Endothelial cell of umbilical vein (primary cell): ENCODE measurements at regions of chr10 and their contacts with region 1.

Region 1: GRCh38 chr10:36489611-36490228 is 635.7 kb upstream of the ANKRD30A start:
- DNase-seq: peak; percentile 93
- H3K4me3 ChIP-seq: no peak overlapping the region
- H3K27ac ChIP-seq: peak overlapping the region; percentile 91
- H3K4me1 ChIP-seq: peaks cover 53% of the 10 kb centered on the region
- H3K27me3 ChIP-seq: no peaks in the 10 kb centered on the region
- CTCF ChIP-seq: no peak
- POLR2A ChIP-seq: no peak

Region 2: GRCh38 chr10:35889971-35890677 is 599.6 kb before region 1 on chr10:
- CTCF ChIA-PET with region 1: no interaction called
- POLR2A ChIA-PET with region 1: no interaction called
- dilution Hi-C with region 1: no loop called
- intact Hi-C with region 1: loop called (anchors 5 kb)
- DNase-seq: peak; percentile 85
- H3K4me3 ChIP-seq: no peak overlapping the region
- H3K27ac ChIP-seq: peak overlapping the region; percentile 58
- H3K4me1 ChIP-seq: peaks cover 19% of the 10 kb centered on the region
- H3K27me3 ChIP-seq: peaks cover 0 to 2% of the 10 kb centered on the region in 2 experiments
- CTCF ChIP-seq: no peak
- POLR2A ChIP-seq: no peak

Region 3: DNA sequence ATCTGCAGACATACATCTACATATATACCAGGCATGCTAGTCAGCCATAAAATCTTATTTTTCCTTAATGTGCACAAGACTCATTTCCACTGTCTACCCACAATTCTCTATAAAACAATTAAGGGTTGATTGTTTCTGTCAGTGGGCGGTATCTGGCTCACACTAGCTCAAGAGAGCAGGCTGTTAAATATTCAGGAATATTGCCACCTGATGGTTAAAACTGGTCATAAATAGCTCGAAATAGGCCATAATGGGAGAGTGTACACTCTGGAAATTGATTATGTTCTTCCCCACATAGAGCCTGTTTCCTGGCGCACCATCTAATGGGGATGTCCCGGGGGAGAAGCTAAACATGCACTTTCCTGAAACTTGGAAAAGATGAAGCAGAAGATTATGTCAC is 15.0 kb after region 1 on chr10:
- CTCF ChIA-PET with region 1: interaction called, 13 read pairs
- POLR2A ChIA-PET with region 1: no interaction called
- dilution Hi-C with region 1: no loop called
- intact Hi-C with region 1: no loop called
- DNase-seq: peak; percentile 46
- H3K4me3 ChIP-seq: no peak overlapping the region
- H3K27ac ChIP-seq: no peak overlapping the region
- H3K4me1 ChIP-seq: peaks cover 2% of the 10 kb centered on the region
- H3K27me3 ChIP-seq: peaks cover 2 to 9% of the 10 kb centered on the region in 2 experiments
- CTCF ChIP-seq: no peak
- POLR2A ChIP-seq: no peak

Region 4: DNA sequence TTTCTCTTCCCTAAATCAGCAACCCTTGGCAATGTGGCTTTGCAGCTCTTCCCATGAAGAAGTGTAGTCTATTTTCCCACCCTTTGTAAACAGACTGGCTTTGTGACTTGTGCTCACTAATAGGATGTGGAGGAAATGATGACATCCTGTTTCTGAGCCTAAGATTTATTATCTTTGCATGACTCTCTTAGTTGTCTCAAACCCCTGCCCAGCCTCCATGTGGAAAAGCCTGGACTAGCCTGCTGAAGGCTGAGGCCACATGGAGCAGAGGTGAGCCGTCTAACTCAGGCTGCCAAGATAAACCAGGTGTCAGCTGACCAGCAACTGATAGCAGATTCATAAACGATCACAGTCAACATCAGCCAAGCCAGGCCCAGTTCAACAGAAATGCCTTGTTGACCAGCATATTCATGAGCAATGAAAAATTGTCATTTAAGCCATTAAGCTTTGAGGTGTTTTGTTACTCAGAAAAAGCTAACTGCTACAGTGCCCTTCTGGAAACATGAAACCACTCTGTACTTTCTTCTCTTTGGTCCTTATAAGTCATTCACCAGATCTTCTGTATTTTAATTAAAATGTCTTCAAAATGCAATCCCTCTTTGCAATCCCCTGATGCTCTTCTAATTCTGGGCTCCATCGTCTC is 49.3 kb after region 1 on chr10:
- CTCF ChIA-PET with region 1: interaction called, 5 read pairs
- POLR2A ChIA-PET with region 1: no interaction called
- dilution Hi-C with region 1: no loop called
- intact Hi-C with region 1: loop called (anchors 1 kb)
- DNase-seq: peak; percentile 100
- H3K4me3 ChIP-seq: no peak overlapping the region
- H3K27ac ChIP-seq: peak overlapping the region; percentile 63
- H3K4me1 ChIP-seq: peaks cover 30% of the 10 kb centered on the region
- H3K27me3 ChIP-seq: no peaks in the 10 kb centered on the region
- CTCF ChIP-seq: peak; percentile 14 to 16
- POLR2A ChIP-seq: peak; percentile 57

Region 5: DNA sequence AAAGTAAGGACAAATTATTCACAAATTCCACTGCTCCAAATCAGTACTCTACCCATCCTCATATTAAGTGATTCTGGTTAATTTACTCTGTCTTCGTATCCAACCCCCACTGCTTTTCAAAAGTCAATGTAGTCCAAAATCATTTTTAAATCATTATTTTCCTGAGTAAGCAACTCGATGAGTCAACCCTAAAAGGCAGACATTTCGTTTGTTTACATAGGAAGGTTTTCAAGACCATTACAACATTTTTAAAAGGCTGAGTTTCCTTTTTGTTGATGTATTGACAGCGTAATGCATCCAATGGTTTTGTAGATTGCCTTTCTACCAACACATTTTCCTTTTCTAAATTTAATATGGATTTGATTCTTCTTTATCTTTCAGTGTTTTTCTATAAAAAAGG is 112.7 kb after region 1 on chr10:
- CTCF ChIA-PET with region 1: no interaction called
- POLR2A ChIA-PET with region 1: no interaction called
- dilution Hi-C with region 1: no loop called
- intact Hi-C with region 1: loop called (anchors 1 kb)
- DNase-seq: peak; percentile 77
- H3K4me3 ChIP-seq: no peak overlapping the region
- H3K27ac ChIP-seq: no peak overlapping the region
- H3K4me1 ChIP-seq: peaks cover 32% of the 10 kb centered on the region
- H3K27me3 ChIP-seq: no peaks in the 10 kb centered on the region
- CTCF ChIP-seq: no peak
- POLR2A ChIP-seq: no peak

Region 6: DNA sequence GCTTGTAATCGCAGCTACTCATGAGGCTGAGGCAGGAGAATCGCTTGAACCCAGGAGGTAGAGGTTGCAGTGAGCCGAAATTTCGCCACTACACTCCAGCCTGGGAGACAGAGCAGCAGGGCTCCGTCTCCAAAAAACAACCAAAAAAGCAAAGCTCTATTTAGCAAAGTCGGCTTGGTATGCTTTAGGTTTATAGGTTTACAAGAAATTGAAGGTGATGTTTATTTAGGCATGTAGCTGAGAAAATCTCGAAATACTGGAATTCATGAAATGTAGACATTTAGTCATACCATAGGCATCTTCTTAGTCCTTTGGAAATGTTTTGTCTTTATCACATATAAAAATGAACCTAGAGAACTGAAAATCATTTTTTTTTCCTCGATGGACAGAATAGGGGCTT is 181.9 kb after region 1 on chr10:
- CTCF ChIA-PET with region 1: no interaction called
- POLR2A ChIA-PET with region 1: no interaction called
- dilution Hi-C with region 1: no loop called
- intact Hi-C with region 1: no loop called
- DNase-seq: no peak
- H3K4me3 ChIP-seq: no peak overlapping the region
- H3K27ac ChIP-seq: no peak overlapping the region
- H3K4me1 ChIP-seq: peaks cover 4% of the 10 kb centered on the region
- H3K27me3 ChIP-seq: no peaks in the 10 kb centered on the region
- CTCF ChIP-seq: no peak
- POLR2A ChIP-seq: no peak